BJ (cell line): ENCODE measurements at regions of chr3 and their contacts with region 1.

Region 1: GRCh38 chr3:25594007-25594502 is 70.7 kb downstream of the TOP2B start:
- DNase-seq: no peak
- H3K4me3 ChIP-seq: no peak overlapping the region
- H3K27me3 ChIP-seq: no peaks in the 10 kb centered on the region
- CTCF ChIP-seq: peak; percentile 72

Region 2: DNA sequence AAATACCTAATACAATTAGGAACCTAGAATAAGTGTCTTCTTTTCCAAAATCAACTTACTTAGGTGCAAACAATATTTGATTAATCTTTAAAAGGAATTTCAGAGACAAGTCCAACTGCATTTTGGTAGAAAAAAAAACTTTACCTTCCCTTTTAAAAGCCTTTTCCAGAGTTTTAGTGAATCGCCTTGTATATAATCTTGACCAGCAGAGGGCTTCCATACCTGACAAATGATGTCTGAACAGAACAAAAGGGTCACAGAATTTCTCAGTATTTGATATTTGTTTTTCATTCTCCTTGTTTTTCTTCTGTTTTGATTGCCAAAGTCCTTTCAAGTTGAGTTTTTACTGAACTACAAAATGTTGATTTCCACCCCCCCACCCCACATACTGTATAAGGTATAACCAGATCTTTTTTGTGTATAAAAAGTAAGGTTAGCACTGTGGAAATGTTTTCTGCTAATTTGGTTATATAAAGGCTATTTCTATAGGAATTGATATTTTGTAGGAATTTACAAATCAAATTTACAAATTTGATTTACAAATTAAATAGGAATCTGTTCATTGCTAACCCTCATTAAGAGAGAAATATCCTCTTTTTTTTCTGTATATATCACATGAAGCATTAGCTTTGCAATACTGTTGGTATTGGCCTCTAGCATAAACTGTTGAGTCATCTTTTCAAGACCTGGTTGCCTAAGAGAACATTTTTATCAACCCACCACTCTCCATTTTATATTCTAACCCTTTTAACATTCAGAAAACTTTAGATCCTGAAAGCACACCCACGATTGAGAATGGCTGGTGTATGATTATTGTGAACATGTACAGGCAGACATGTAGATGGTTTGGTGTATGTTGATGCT is 630.1 kb before region 1 on chr3:
- CTCF ChIA-PET with region 1: interaction called, 13 read pairs
- POLR2A ChIA-PET with region 1: no interaction called
- DNase-seq: no peak
- H3K4me3 ChIP-seq: no peak overlapping the region
- H3K27me3 ChIP-seq: no peaks in the 10 kb centered on the region
- CTCF ChIP-seq: peak; percentile 54

Region 3: GRCh38 chr3:25021816-25022215 is 572.2 kb before region 1 on chr3:
- CTCF ChIA-PET with region 1: interaction called, 22 read pairs
- POLR2A ChIA-PET with region 1: no interaction called
- DNase-seq: no peak
- H3K4me3 ChIP-seq: no peak overlapping the region
- H3K27me3 ChIP-seq: no peaks in the 10 kb centered on the region
- CTCF ChIP-seq: peak; percentile 74

Region 4: DNA sequence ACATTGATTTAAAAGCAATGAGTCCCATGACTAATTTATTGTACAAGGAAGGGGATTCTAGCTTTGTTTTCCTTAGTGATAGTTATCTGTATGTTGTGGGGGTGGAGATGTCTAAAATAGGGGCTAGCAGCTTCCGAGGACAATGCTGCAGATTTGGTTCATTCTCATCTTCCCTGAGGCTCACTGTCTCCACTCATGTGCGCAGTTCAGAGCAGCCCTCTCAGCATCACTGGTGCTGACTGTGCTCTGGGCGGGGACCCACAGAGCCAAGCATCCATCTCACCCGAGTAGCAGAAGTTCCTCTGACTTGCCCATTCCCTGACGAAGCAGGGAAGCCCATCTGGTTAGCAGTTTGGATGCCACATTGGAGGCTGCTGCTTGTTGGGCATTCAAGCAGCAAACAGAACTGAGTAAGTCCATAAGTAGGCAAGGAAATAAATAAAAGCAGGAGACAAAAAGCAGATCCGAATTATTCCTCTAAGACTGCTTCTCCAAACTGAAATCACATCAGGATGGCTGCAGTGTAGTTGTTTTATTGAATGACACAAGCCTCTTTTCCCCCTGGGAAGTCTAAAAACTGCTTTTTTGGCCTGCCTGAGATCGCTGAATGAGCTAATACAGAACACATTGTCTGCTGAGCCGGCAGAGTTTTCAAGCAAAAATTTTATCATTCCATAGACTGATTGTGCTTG is 138.5 kb before region 1 on chr3:
- CTCF ChIA-PET with region 1: interaction called, 12 read pairs
- POLR2A ChIA-PET with region 1: no interaction called
- DNase-seq: peak; percentile 50
- H3K4me3 ChIP-seq: no peak overlapping the region
- H3K27me3 ChIP-seq: no peaks in the 10 kb centered on the region
- CTCF ChIP-seq: no peak

Region 5: GRCh38 chr3:25468866-25469319 is 125.2 kb before region 1 on chr3:
- CTCF ChIA-PET with region 1: interaction called, 23 read pairs
- POLR2A ChIA-PET with region 1: no interaction called
- DNase-seq: peak; percentile 96
- H3K4me3 ChIP-seq: no peak overlapping the region
- H3K27me3 ChIP-seq: no peaks in the 10 kb centered on the region
- CTCF ChIP-seq: peak; percentile 58